GM12878 (cell line): ENCODE measurements at regions of chr7 and their contacts with region 1.

Region 1: DNA sequence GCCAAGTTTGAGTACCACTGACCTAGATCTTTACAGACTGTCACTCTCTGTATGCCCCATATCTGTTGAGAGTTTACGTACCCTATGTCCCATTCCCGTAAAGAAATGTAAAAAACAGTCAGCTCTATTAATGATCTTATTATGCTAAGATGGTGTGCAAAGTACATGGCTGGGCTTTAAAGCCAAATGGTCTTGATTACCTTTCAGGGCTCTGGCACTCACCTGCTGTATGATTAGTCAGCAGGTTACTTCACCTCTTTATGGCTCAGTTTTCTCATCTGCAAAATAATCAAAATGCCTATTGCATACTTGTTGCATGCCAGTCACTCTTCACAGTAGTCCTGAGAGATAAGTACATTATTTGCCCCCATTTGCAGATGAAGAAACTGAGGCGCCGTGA is 54.2 kb downstream of the LHFPL3 start:
- DNase-seq: no peak
- ATAC-seq: no peak
- H3K4me3 ChIP-seq: no peak overlapping the region
- H3K27ac ChIP-seq: no peak overlapping the region
- H3K4me1 ChIP-seq: no peaks in the 10 kb centered on the region
- H3K27me3 ChIP-seq: no peaks in the 10 kb centered on the region
- CTCF ChIP-seq: no peak
- EP300 ChIP-seq: no peak
- POLR2A ChIP-seq: no peak
- RAD21 ChIP-seq: no peak

Region 2: DNA sequence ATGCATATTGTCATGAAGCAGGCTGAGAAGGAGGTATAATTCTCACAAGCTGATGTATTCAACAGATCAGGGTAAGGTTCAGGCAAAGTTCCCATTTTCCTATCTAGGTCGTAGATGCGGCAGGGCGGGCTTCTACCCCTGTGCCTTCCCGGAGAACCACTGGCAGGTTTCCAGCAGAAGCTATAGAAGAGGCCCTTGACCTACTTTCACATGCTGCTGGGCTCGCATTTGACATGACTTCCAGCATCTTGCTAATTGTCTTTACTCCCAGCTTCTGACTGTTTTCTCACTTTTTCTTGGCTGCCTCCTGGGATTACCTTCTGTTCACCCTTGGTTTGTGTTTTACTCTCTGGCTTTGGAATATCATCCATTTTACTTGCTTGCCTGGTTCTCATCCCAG is 142.2 kb before region 1 on chr7:
- CTCF ChIA-PET with region 1: no interaction called
- POLR2A ChIA-PET with region 1: no interaction called
- RAD21 ChIA-PET with region 1: no interaction called
- SMC1A ChIA-PET with region 1: no interaction called
- in situ Hi-C with region 1: no loop called
- intact Hi-C with region 1: loop called (anchors 10 kb)
- DNase-seq: no peak
- ATAC-seq: no peak
- H3K4me3 ChIP-seq: no peak overlapping the region
- H3K27ac ChIP-seq: no peak overlapping the region
- H3K4me1 ChIP-seq: no peaks in the 10 kb centered on the region
- H3K27me3 ChIP-seq: no peaks in the 10 kb centered on the region
- CTCF ChIP-seq: no peak
- EP300 ChIP-seq: no peak
- POLR2A ChIP-seq: no peak
- RAD21 ChIP-seq: no peak

Region 3: GRCh38 chr7:104286839-104287238 is 95.8 kb before region 1 on chr7:
- CTCF ChIA-PET with region 1: no interaction called
- POLR2A ChIA-PET with region 1: no interaction called
- RAD21 ChIA-PET with region 1: no interaction called
- SMC1A ChIA-PET with region 1: no interaction called
- in situ Hi-C with region 1: no loop called
- intact Hi-C with region 1: no loop called
- DNase-seq: no peak
- ATAC-seq: no peak
- H3K4me3 ChIP-seq: no peak overlapping the region
- H3K27ac ChIP-seq: no peak overlapping the region
- H3K4me1 ChIP-seq: no peaks in the 10 kb centered on the region
- H3K27me3 ChIP-seq: no peaks in the 10 kb centered on the region; a peak in 1 of 4 replicates
- CTCF ChIP-seq: no peak
- EP300 ChIP-seq: no peak
- POLR2A ChIP-seq: no peak
- RAD21 ChIP-seq: no peak

Region 4: GRCh38 chr7:104431930-104432329 is 49.3 kb after region 1 on chr7:
- CTCF ChIA-PET with region 1: no interaction called
- POLR2A ChIA-PET with region 1: no interaction called
- RAD21 ChIA-PET with region 1: no interaction called
- SMC1A ChIA-PET with region 1: no interaction called
- in situ Hi-C with region 1: no loop called
- intact Hi-C with region 1: no loop called
- DNase-seq: no peak
- ATAC-seq: no peak
- H3K4me3 ChIP-seq: no peak overlapping the region
- H3K27ac ChIP-seq: no peak overlapping the region
- H3K4me1 ChIP-seq: no peaks in the 10 kb centered on the region
- H3K27me3 ChIP-seq: no peaks in the 10 kb centered on the region
- CTCF ChIP-seq: no peak
- EP300 ChIP-seq: no peak
- POLR2A ChIP-seq: no peak
- RAD21 ChIP-seq: no peak

Region 5: DNA sequence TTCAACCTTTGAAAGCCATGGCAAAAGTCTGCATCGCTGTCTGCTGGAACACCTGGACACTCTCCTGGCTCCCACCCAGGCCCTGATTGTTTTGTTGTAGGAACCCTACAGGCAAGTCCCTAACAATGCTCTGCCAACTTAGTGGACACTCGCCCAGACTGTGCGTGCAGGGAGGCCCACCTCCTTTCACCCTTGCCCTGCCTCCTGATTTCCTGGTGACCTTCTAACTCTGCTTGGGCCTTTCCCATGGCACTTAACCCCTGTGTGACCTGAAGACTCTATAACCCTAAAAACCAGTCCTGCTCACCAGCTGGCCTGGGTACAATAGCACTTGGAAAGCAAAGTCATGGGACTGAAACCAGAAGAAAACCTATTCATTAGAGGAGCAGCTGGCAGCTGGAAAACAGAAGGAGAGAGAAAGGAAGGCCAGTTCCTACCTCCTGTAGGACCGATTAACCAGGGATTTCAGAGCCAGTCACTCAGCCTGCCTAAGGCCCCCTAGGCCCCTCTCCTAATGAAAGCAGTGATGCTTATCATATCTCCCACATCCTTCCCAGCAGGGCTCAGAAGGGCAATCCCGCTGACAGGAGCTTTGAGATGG is 548.7 kb after region 1 on chr7:
- CTCF ChIA-PET with region 1: no interaction called
- POLR2A ChIA-PET with region 1: no interaction called
- RAD21 ChIA-PET with region 1: no interaction called
- SMC1A ChIA-PET with region 1: no interaction called
- in situ Hi-C with region 1: no loop called
- intact Hi-C with region 1: no loop called
- DNase-seq: no peak
- ATAC-seq: no peak
- H3K4me3 ChIP-seq: no peak overlapping the region
- H3K27ac ChIP-seq: no peak overlapping the region
- H3K4me1 ChIP-seq: no peaks in the 10 kb centered on the region
- H3K27me3 ChIP-seq: no peaks in the 10 kb centered on the region
- CTCF ChIP-seq: no peak
- EP300 ChIP-seq: no peak
- POLR2A ChIP-seq: no peak
- RAD21 ChIP-seq: no peak

Region 6: GRCh38 chr7:105621617-105622016 is 1239.0 kb after region 1 on chr7:
- CTCF ChIA-PET with region 1: no interaction called
- POLR2A ChIA-PET with region 1: no interaction called
- RAD21 ChIA-PET with region 1: no interaction called
- SMC1A ChIA-PET with region 1: no interaction called
- in situ Hi-C with region 1: no loop called
- intact Hi-C with region 1: no loop called
- DNase-seq: no peak
- ATAC-seq: no peak
- H3K4me3 ChIP-seq: no peak overlapping the region
- H3K27ac ChIP-seq: no peak overlapping the region
- H3K4me1 ChIP-seq: no peaks in the 10 kb centered on the region
- H3K27me3 ChIP-seq: no peaks in the 10 kb centered on the region
- CTCF ChIP-seq: no peak
- EP300 ChIP-seq: no peak
- POLR2A ChIP-seq: no peak
- RAD21 ChIP-seq: no peak